Motor neuron (in vitro differentiated cells): ENCODE measurements at regions of chr11 and their contacts with region 1.

Region 1: GRCh38 chr11:75896843-75897419 is 81.9 kb downstream of the UVRAG start:
- ATAC-seq: peak in 2 of 8 experiments; percentile 28 to 37
- H3K4me3 ChIP-seq: no peak overlapping the region
- H3K27ac ChIP-seq: no peak overlapping the region
- H3K4me1 ChIP-seq: no peaks in the 10 kb centered on the region

Region 2: GRCh38 chr11:76013526-76013925 is 116.6 kb after region 1 on chr11:
- in situ Hi-C with region 1: no loop called
- ATAC-seq: no peak
- H3K4me3 ChIP-seq: no peak overlapping the region
- H3K27ac ChIP-seq: no peak overlapping the region
- H3K4me1 ChIP-seq: no peaks in the 10 kb centered on the region

Region 3: DNA sequence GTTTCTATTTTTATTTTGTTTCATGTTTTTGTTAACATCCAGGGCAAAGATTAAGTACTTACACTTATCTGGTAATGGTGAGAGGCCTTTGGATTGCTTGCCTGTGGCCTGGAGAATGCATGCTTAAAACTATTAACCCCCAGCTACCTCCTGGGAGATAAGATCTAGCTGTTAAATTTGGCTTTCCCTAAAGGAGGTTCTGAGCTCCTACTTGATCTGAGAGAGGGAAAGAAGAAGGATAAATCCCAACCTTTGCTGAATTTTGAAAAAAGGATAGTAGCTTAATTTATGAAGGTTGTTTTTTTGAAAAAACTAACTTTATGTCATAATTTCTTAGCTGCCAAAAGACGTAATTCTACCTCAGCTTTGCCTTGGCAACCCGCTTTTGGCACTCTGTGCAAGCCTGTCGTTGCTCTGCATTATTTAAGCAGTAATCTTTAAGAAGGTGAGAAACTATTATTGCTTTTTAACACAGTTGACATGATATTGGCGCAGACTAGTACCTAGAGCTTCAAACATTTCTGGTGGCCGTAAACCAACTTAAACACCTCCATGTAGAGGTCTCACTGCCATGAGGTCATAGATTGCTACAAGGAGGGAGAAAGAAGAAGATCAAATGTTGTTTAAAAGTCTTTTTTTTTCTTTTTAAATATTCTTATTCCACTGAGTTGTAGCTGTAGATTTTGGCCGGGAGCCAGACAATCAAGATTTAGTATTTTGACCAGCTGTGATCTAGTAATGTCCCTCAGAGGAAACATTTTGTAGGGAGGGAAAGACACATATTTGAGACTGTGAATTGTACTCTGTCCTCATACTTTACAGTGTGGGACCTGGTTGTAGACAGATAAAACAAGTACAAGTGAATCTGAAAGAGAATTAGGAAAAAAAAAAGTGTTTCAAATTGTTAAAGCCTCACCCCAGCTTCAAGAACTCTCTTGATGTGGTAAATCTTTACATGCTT is 235.0 kb after region 1 on chr11:
- in situ Hi-C with region 1: loop called in 1 of 9 experiments (anchors 25 kb)
- ATAC-seq: peak in 1 of 8 experiments; percentile 21
- H3K4me3 ChIP-seq: no peak overlapping the region
- H3K27ac ChIP-seq: no peak overlapping the region
- H3K4me1 ChIP-seq: no peaks in the 10 kb centered on the region

Region 4: GRCh38 chr11:76185931-76186401 is 289.0 kb after region 1 on chr11:
- in situ Hi-C with region 1: loop called in 1 of 9 experiments (anchors 25 kb)
- ATAC-seq: peak in 7 of 8 experiments; percentile 18 to 82 (median 79)
- H3K4me3 ChIP-seq: no peak overlapping the region
- H3K27ac ChIP-seq: no peak overlapping the region
- H3K4me1 ChIP-seq: peaks cover 8 to 12% of the 10 kb centered on the region in 2 donors